Activated CD8-positive, alpha-beta T cell treated with anti-CD3 and anti-CD28 coated beads, Interleukin-2, amount 10 ng/mL, durations not matched to agents 7 days and 5 days (primary cell): ENCODE measurements at regions of chr19 and their contacts with region 1.

Region 1: DNA sequence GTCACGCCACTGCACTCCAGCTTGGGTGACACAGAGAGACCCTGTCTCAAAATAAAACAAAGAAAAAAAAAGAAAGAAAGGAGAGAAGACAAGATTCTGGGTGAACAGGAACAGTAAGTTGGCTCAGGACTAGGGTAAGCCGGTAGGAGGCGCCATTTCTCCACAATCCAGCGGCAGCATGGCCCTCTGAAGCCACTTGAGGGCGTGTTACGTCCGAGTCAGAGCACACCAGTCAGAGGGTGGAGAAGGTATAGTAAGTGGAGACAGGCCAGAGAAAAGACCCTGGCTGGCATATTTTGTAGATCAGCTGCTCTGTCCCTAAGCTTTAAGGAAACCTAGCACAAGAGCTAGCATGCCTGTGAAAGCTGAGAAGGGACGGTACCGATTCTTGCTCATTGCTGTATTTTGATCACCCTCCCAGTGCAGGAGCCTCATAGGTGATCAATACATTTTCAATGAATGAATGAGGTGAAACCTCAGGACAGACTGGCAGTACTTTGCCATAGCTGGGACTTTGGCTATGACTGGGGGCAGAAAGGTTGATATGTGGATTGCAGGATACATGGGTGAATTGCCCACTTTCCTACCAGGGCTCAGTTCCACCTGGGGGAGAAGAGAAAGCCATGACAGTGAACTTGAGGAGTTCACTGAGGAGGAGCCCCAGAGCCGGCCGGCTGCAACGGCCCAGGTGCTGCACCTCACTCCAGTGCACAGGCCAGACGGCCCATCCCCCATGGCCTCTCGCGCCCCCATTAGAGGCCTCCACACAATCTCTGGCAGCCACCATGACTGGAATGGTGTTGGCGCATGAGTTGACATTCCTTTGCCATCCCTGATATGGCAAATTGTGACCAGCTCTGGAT is 23.5 kb downstream of the POU2F2 start:
- DNase-seq: peak; percentile 94
- ATAC-seq: peak; percentile 94
- H3K4me3 Mint-ChIP-seq: no peak overlapping the region
- H3K27ac Mint-ChIP-seq: peak overlapping the region; percentile 26
- H3K4me1 Mint-ChIP-seq: peaks cover 33% of the 10 kb centered on the region
- H3K27me3 Mint-ChIP-seq: no peaks in the 10 kb centered on the region

Region 2: DNA sequence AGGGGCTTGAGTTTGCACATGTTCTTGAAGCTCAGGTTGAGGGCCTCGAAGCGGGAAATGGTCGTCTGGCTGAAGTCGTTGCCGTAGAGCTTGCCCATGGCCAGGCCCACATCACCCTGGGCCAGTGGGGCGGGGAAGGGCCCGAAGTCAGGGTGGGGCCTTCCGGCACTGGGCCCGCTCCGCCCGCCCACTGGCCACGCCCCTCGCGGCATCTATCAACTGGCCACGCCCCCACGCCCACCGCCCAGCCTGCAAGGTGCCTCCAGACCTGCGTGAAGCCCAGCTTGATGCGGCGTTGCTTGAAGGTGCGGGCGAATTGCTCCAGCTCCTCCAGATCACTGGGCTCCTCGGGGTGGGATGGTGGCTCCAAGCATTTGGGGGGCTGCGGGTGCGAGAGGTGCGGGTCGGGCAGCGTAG is 12.9 kb before region 1 on chr19:
- CTCF ChIA-PET with region 1: interaction called, 20 read pairs
- POLR2A ChIA-PET with region 1: no interaction called
- DNase-seq: no peak
- ATAC-seq: no peak
- H3K4me3 Mint-ChIP-seq: no peak overlapping the region
- H3K27ac Mint-ChIP-seq: no peak overlapping the region
- H3K4me1 Mint-ChIP-seq: peaks cover 14% of the 10 kb centered on the region
- H3K27me3 Mint-ChIP-seq: no peaks in the 10 kb centered on the region

Region 3: DNA sequence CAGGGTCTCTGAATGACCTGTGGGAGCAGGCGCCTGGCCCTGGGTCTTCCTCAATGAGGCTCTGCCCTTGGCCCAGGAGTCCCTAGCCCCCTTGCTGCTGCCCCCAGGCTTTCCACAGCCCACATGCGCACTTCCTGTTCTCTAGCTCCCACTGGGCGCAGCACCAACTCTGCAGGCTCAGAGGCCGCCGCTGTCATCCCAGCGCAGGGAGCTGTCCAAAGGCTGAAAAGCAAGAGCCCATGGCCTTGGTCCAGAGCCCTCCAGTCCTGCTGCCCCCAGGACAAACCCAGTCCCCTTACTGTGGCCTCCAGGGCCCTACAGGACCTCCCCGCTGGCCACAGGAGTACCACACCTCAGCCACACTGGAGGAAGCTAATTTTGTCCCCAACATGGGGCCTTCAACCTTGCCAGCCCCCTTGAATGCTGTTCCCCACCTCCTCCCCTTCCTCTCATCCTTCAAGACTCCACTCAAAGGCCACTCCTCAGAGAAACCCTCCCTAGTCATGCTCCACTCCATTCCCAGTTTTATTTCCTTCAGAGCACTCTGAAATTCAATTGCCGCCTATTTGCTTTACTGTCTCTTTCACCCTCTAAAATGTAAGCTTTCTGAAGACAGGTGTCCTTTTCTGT is 31.5 kb after region 1 on chr19:
- CTCF ChIA-PET with region 1: interaction called, 12 read pairs
- POLR2A ChIA-PET with region 1: no interaction called
- DNase-seq: peak; percentile 75
- ATAC-seq: peak; percentile 80
- H3K4me3 Mint-ChIP-seq: no peak overlapping the region
- H3K27ac Mint-ChIP-seq: no peak overlapping the region
- H3K4me1 Mint-ChIP-seq: peaks cover 19% of the 10 kb centered on the region
- H3K27me3 Mint-ChIP-seq: no peaks in the 10 kb centered on the region

Region 4: GRCh38 chr19:42184401-42184861 is 75.7 kb after region 1 on chr19:
- CTCF ChIA-PET with region 1: interaction called, 40 read pairs
- POLR2A ChIA-PET with region 1: no interaction called
- DNase-seq: peak; percentile 74
- ATAC-seq: peak; percentile 57
- H3K4me3 Mint-ChIP-seq: no peak overlapping the region
- H3K27ac Mint-ChIP-seq: peak overlapping the region; percentile 65
- H3K4me1 Mint-ChIP-seq: peaks cover 36% of the 10 kb centered on the region
- H3K27me3 Mint-ChIP-seq: peaks cover 5% of the 10 kb centered on the region

Region 5: GRCh38 chr19:42255766-42256745 is 147.3 kb after region 1 on chr19:
- CTCF ChIA-PET with region 1: no interaction called
- POLR2A ChIA-PET with region 1: no interaction called
- DNase-seq: no peak
- ATAC-seq: no peak
- H3K4me3 Mint-ChIP-seq: peak overlapping the region; percentile 74
- H3K27ac Mint-ChIP-seq: no peak overlapping the region
- H3K4me1 Mint-ChIP-seq: peaks cover 27% of the 10 kb centered on the region
- H3K27me3 Mint-ChIP-seq: peaks cover 7% of the 10 kb centered on the region

Region 6: GRCh38 chr19:42295831-42296525 is 187.2 kb after region 1 on chr19:
- CTCF ChIA-PET with region 1: interaction called, 19 read pairs
- POLR2A ChIA-PET with region 1: no interaction called
- DNase-seq: peak; percentile 92
- ATAC-seq: peak; percentile 86
- H3K4me3 Mint-ChIP-seq: no peak overlapping the region
- H3K27ac Mint-ChIP-seq: no peak overlapping the region
- H3K4me1 Mint-ChIP-seq: peaks cover 10% of the 10 kb centered on the region
- H3K27me3 Mint-ChIP-seq: no peaks in the 10 kb centered on the region